Head of caudate nucleus (tissue), 42 donors: ENCODE measurements at regions of chr2 and their contacts with region 1.

Region 1: GRCh38 chr2:34096562-34097171 is 497.6 kb upstream of the FAM98A start:
- DNase-seq: peak in 36 of 42 donors; percentile 14 to 91 (median 70)

Region 2: GRCh38 chr2:33967103-33967502 is 129.6 kb before region 1 on chr2:
- intact Hi-C with region 1: no loop called
- DNase-seq: no peak

Region 3: GRCh38 chr2:35410431-35411061 is 1313.9 kb after region 1 on chr2:
- intact Hi-C with region 1: loop called (anchors 10 kb)
- DNase-seq: peak; percentile 39 to 89 (median 76)